MCF 10A (cell line): ENCODE measurements at regions of chr17 and their contacts with region 1.

Region 1: DNA sequence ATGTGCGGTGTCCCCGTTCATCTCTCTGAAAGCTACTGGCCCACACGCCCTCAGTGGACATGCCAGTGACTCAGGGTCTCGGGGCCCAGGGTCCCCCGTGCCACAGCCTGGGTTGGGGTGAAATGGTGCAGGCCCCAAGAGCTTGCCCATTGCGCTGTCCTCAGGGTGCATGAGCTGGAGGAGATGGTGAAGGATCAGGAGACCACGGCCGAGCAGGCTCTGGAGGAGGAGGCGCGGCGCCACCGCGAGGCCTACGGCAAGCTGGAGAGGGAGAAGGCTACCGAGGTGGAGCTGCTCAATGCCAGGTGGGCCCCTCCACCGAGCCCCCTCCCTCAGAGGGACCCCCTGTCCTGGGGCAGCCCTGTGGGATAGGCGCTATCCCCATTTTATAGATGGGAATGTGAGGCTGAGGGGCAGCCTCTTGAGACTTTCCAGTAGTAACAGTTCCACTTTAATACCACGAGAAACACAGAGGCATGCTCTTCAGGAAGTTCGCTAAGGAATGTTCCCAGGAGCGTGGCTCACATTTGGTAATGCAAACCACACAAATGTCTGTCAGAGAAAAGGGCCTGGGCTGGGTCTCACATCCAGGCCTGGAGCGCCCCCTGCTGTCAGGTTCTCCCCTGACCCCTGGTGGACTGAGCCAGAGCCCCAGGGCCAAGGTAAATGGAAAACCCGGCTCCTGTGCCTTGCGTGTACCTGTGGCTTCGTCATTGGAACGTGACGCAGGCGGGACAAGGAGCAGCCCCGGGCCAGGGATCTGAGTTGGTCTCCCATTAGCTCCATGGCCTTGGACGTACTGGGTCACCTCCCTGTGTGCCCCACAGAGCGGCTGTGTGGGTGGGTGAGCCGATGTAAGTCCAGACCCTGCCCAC is 133.7 kb downstream of the RAB11FIP4 start:
- DNase-seq: peak; percentile 87
- H3K4me3 Mint-ChIP-seq: no peak overlapping the region
- H3K27ac Mint-ChIP-seq: no peak overlapping the region
- H3K4me1 Mint-ChIP-seq: no peaks in the 10 kb centered on the region
- H3K27me3 Mint-ChIP-seq: no peaks in the 10 kb centered on the region
- CTCF ChIP-seq: peak; percentile 88

Region 2: DNA sequence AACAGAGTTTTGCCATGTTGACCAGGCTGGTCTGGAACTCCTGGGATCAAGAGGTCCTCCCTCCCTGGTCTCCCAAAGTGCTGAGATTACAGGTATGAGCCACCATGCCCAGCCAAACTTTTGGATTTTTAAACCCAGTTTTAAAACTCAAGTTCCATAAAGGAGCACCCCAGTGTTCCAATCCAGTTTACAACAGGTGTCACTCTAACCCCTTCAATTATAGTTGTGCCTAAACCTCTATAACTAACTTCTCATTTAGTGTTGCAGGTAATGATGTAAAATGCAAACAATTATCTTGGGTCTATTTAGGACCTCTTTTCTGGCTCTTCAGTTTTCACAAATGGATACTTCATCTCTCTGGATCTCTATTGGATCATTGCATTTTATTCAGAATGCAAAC is 611.2 kb before region 1 on chr17:
- CTCF ChIA-PET with region 1: no interaction called
- POLR2A ChIA-PET with region 1: no interaction called
- intact Hi-C with region 1: no loop called
- DNase-seq: no peak
- H3K4me3 Mint-ChIP-seq: no peak overlapping the region
- H3K27ac Mint-ChIP-seq: no peak overlapping the region
- H3K4me1 Mint-ChIP-seq: no peaks in the 10 kb centered on the region
- H3K27me3 Mint-ChIP-seq: no peaks in the 10 kb centered on the region
- CTCF ChIP-seq: no peak

Region 3: GRCh38 chr17:31226373-31226772 is 298.8 kb before region 1 on chr17:
- CTCF ChIA-PET with region 1: no interaction called
- POLR2A ChIA-PET with region 1: no interaction called
- intact Hi-C with region 1: no loop called
- DNase-seq: no peak
- H3K4me3 Mint-ChIP-seq: no peak overlapping the region
- H3K27ac Mint-ChIP-seq: no peak overlapping the region
- H3K4me1 Mint-ChIP-seq: no peaks in the 10 kb centered on the region
- H3K27me3 Mint-ChIP-seq: no peaks in the 10 kb centered on the region
- CTCF ChIP-seq: no peak

Region 4: DNA sequence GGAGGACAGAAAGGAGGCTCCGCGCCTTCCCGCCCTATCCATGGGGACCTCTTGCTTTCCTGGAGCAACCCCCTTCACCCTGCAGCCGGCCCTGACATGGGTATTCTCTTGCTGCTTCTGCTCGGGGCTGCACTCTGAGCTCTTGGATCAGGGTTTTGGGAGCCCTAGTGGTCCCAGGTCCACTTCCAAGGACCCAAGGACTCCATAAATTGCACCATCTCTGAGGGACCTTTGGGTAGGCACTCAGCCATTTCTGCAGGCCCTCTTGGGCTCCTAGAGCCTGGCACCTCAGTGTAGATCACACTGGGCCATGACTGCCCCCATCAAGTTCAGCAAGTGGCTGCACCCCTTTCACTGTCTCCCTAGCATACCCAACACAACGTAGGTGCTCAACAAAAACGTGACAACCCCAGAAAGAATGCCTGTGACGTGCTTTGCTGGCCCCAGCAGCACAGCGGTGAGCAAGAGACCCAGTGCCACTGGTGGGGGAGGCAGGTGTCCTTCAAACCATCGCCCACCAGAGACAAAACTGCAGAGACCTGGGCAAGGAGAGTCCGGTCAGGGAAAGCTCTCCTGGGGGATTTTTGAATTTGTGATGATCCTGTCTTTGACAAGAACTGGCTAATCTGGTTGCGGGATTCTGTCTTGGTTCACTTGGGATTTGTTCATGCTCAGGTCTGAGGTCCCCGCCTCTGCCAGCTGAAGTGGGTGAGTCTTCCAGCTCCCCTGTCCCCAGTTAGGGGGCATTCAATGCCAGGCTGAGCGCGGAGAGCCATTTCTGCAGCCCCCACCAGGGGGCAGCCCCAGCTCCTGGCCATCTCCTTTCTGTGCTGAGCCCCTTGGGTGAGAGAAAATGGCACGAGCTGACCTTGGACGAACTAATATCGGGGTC is 136.1 kb before region 1 on chr17:
- CTCF ChIA-PET with region 1: interaction called, 4 read pairs
- POLR2A ChIA-PET with region 1: no interaction called
- intact Hi-C with region 1: loop called (anchors 1 kb)
- DNase-seq: peak; percentile 27
- H3K4me3 Mint-ChIP-seq: no peak overlapping the region
- H3K27ac Mint-ChIP-seq: no peak overlapping the region
- H3K4me1 Mint-ChIP-seq: no peaks in the 10 kb centered on the region
- H3K27me3 Mint-ChIP-seq: peaks cover 12% of the 10 kb centered on the region
- CTCF ChIP-seq: peak; percentile 48

Region 5: DNA sequence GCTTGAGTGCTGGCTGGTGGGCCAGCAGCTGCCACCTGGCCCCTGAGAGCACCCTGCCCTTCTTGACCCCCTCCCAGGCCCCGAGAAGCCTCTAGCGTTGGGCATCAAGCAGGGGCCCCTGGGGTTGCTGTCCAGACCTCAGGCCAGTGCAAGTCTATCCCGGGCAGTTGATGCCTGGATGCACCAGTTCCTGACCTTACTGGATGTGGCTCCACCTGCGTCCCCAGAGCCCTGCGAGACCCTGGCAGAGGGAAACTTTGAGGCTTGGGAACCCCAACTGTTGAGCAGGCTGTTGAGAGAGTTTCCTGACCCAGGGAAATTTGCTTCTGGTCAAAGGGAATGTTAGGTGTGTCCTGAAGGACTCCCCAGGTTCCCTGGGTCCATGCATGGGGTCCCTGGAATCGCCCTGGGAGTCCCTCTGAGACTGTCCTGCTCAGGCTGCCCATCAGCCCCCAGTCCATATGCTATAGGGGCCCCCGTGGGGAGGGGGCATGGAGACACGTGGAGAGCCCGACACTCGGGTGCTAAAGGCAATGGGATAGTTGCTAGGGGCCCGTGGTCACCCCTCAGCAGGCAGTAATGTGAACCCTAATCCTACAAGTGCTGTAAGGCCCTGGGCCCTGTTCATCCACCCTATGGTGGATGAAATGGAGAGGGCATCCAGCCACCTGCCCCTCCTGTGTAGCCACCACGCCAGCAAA is 87.3 kb before region 1 on chr17:
- CTCF ChIA-PET with region 1: interaction called, 84 read pairs
- POLR2A ChIA-PET with region 1: interaction called, 5 read pairs
- intact Hi-C with region 1: loop called (anchors 1 kb)
- DNase-seq: no peak
- H3K4me3 Mint-ChIP-seq: no peak overlapping the region
- H3K27ac Mint-ChIP-seq: no peak overlapping the region
- H3K4me1 Mint-ChIP-seq: no peaks in the 10 kb centered on the region
- H3K27me3 Mint-ChIP-seq: peaks cover 34% of the 10 kb centered on the region
- CTCF ChIP-seq: no peak

Region 6: DNA sequence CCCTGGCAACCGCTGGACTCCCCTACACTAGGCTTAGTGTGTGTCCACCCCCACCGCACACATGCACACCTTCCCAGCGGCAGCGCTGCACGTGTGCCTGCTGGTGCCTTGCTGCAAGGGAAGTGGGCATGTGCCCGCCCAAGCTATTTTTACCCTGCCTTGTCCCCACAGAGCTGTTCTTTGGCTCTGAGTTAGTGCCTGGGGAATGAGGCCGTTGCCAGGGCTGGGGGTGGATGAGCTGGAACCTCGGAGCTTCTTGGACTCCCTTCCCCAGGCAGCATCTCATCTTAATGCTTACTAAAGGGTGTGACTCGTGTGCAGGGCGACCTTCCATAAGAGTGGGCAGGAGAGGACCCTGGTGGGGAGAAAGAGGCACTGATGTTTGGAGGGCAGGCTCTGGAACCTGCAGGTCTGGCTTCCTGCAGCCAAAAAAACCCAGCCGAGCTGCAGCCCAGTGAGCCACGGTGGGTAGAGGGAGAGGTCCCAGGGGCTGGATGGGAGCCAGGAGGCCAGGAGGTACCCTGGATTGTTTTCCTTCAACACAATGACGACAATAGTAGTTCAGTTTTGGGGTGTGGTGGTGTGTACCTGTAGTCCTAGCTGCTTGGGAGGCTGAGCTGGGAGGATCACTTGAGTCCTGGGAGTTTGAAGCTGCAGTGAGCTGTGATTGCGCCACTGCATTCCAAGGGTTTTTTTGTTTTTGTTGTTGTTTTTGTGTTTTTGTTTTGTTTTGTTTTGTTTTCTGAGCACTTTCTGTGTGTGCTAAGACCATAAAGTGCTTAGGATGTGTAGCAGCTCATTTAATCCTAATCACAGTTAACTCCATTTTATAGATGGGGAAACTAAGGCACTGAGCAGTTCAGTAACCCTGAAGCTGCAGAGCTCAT is 14.6 kb before region 1 on chr17:
- CTCF ChIA-PET with region 1: interaction called, 20 read pairs
- POLR2A ChIA-PET with region 1: no interaction called
- intact Hi-C with region 1: no loop called
- DNase-seq: no peak
- H3K4me3 Mint-ChIP-seq: no peak overlapping the region
- H3K27ac Mint-ChIP-seq: no peak overlapping the region
- H3K4me1 Mint-ChIP-seq: no peaks in the 10 kb centered on the region
- H3K27me3 Mint-ChIP-seq: no peaks in the 10 kb centered on the region
- CTCF ChIP-seq: no peak

Region 7: DNA sequence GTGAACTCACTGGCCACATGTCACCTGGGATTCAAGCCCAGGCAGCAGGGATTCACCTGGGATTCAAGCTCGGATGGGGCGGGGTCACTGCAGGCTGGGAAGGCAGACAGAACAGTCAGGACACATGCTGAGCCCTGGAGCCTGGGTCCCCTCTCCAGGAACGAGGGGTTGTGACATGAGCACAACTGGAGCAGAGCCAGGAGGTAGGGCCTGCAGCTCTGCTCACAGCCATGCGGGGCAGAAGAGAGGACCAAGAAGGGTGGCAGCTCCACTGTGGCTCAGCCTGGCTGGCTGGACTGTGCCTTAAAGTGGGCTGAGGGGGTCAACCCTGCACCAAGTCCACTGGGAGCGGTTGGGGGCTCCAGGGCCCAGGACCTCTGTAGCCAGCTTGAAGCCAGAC is 16.4 kb after region 1 on chr17:
- CTCF ChIA-PET with region 1: interaction called, 21 read pairs
- POLR2A ChIA-PET with region 1: no interaction called
- intact Hi-C with region 1: no loop called
- DNase-seq: peak; percentile 26
- H3K4me3 Mint-ChIP-seq: no peak overlapping the region
- H3K27ac Mint-ChIP-seq: no peak overlapping the region
- H3K4me1 Mint-ChIP-seq: no peaks in the 10 kb centered on the region
- H3K27me3 Mint-ChIP-seq: no peaks in the 10 kb centered on the region
- CTCF ChIP-seq: peak; percentile 14